ENCODE measurements at regions of chr3 and their contacts with region 1.

Region 1: DNA sequence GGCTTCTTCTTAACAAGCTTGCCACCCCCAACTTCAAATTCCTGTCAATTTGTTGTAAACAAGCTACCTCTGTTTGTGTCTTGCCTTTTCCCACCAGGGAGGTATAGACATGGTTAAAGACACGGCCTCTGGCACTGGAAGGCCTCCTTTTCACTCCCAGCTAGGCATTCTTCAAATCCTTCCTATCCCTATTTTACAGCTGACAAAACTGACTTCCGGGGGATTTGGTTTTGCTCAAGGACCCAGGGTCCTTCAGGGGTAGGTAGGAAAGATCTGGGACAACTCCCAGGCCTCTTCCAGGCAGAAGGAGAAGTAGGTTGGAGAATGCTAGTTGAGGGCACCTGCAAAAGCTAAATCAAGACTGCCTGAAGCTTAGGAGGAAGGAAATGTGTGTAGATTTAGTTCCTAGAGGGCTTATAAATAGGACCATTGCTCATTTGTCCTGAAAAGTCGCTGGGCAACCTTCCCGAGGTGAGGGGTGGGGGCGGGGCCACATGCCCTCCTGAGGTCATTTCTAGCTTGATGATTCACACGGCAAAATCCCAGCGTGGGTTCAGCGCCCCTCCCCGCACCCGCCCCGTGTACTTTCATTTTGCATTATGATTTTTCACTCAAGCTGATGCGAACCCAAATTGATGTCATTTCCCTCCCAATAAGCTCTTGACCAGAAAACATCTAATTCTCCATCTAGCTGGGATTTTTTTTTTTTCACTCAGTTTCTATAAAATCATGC is 365.5 kb downstream of the SHQ1 start:
- DNase-seq: peak; percentile 95
- H3K4me3 Mint-ChIP-seq: peak overlapping the region; percentile 42
- H3K27ac Mint-ChIP-seq: peak overlapping the region; percentile 91
- H3K4me1 Mint-ChIP-seq: peaks cover 79% of the 10 kb centered on the region
- H3K27me3 Mint-ChIP-seq: no peaks in the 10 kb centered on the region

Region 2: DNA sequence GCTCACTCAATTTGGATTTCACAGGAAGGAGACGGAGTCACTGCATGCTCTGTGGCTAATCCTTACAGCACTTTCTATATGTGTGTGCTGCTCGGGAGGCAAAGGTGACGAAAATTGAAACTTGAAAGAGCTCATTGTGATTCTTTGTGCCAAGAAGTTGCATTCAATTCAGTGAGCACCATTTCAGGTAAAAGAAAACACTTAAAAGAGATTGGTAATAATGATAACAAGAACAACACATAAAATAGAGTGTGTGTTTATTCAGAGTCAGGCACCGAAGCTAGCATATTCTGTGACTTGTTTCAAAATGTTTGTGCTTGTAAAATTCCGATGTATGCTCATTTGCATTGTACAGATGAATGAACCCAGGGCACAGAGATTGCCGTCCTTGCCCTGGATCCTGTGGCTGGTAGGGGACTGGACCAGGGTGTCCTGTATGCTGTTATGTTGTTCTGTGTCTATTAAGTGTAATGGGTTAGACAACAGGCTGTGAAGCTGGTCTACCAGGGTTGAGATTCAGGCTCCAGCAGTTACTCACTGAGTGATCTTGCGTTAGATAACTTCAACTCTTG is 504.5 kb before region 1 on chr3:
- CTCF ChIA-PET with region 1: no interaction called
- POLR2A ChIA-PET with region 1: no interaction called
- intact Hi-C with region 1: loop called (anchors 5 kb)
- DNase-seq: peak; percentile 67
- H3K4me3 Mint-ChIP-seq: peak overlapping the region; percentile 38
- H3K27ac Mint-ChIP-seq: peak overlapping the region; percentile 88
- H3K4me1 Mint-ChIP-seq: peaks cover 44% of the 10 kb centered on the region
- H3K27me3 Mint-ChIP-seq: peaks cover 19% of the 10 kb centered on the region

Region 3: DNA sequence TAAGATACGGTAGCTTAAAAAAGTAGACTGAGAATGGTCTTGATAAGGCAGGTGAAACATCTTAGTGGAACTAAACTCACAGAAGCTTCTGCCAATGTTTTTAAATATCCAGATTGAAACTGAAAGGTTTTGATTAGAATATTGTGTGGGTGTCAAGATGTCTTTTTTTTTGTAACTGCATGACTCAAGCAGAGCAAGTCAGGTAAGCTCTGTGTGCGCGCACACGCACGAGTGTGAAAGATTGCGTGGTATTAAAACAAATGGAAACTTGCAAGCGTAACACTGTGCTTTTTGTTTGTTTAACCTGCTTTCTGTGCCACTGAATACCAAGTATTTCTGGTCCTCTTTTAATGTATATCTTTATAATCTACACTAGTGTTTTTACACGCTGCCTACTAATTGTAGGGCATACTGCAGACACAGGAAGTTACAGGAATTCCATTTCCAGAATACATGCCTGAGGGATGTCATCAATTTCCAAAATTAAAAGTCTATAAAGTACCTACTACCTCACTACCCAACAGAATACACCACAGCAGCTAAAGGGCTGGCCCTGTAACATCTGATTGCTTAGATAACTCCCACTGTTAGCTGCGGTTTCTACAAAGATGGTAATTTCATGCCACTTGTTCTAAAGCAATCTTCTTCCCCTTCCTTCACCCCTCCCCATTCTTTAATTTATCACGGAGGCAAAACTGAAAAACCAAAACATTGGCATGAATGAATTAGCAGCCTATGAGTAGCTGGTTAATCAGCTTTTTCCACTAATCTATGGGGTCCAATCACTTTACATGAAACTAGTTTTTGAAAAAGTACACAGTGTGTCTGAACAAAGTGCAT is 107.3 kb before region 1 on chr3:
- CTCF ChIA-PET with region 1: no interaction called
- POLR2A ChIA-PET with region 1: no interaction called
- intact Hi-C with region 1: loop called (anchors 5 kb)
- DNase-seq: peak; percentile 70
- H3K4me3 Mint-ChIP-seq: peak overlapping the region; percentile 6
- H3K27ac Mint-ChIP-seq: peak overlapping the region; percentile 86
- H3K4me1 Mint-ChIP-seq: peaks cover 65% of the 10 kb centered on the region
- H3K27me3 Mint-ChIP-seq: no peaks in the 10 kb centered on the region

Region 4: GRCh38 chr3:72426618-72427397 is 55.9 kb before region 1 on chr3:
- CTCF ChIA-PET with region 1: no interaction called
- POLR2A ChIA-PET with region 1: interaction called, 3 read pairs
- intact Hi-C with region 1: loop called (anchors 5 kb)
- DNase-seq: no peak
- H3K4me3 Mint-ChIP-seq: peak overlapping the region; percentile 23
- H3K27ac Mint-ChIP-seq: peak overlapping the region; percentile 82
- H3K4me1 Mint-ChIP-seq: peaks cover 78% of the 10 kb centered on the region
- H3K27me3 Mint-ChIP-seq: no peaks in the 10 kb centered on the region

Region 5: DNA sequence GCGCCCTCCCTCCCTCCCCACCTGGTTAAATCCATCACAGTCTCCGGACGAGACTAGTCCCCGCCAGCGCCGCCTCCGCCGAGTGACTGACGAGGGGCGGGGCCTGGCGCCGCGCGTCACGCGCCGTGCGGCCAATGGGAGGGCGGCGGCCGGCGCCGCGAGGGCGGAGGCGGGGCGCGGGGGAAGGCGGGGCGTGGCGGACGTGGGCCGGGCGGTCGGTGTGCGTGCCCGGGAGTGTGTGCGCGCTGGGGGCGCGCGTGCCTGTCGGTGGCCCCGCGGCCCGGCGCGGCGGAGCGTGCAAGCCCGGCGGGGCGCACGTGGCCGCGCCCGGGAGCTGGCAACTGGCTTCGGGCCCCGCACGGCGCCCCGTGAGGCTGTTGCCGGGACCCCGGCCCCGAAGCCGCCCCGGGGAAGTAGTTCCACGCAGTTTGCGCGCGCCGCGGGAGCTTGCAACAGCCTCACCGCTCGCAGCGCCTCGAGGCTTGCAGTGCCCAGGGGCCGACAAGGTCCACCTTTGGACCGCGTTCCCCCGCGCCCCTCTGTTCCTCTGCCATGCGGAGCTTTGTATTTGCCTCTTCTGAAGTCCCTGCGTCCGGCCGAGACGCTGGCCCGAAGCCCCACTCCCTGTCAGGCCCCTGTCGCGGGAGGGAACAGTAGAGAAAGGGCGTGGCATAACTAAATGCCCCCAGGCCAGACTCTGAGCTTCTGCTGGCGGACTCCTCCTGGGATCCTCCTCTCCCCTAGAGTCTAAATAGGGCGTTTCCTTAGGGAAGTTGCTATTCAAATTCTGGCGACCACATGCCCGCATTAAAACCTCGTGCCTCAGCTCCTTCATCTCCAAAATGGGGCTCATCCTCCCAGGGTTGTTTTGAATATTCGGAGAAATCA is 35.5 kb before region 1 on chr3:
- CTCF ChIA-PET with region 1: interaction called, 3 read pairs
- POLR2A ChIA-PET with region 1: interaction called, 6 read pairs
- intact Hi-C with region 1: loop called (anchors 1 kb)
- DNase-seq: peak; percentile 93
- H3K4me3 Mint-ChIP-seq: peak overlapping the region; percentile 61
- H3K27ac Mint-ChIP-seq: no peak overlapping the region
- H3K4me1 Mint-ChIP-seq: peaks cover 34% of the 10 kb centered on the region
- H3K27me3 Mint-ChIP-seq: peaks cover 23% of the 10 kb centered on the region

Region 6: GRCh38 chr3:72458358-72458757 is 24.4 kb before region 1 on chr3:
- CTCF ChIA-PET with region 1: no interaction called
- POLR2A ChIA-PET with region 1: no interaction called
- intact Hi-C with region 1: loop called (anchors 1 kb)
- DNase-seq: no peak
- H3K4me3 Mint-ChIP-seq: no peak overlapping the region
- H3K27ac Mint-ChIP-seq: no peak overlapping the region
- H3K4me1 Mint-ChIP-seq: peaks cover 17% of the 10 kb centered on the region
- H3K27me3 Mint-ChIP-seq: peaks cover 18% of the 10 kb centered on the region

Region 7: GRCh38 chr3:72538070-72538745 is 55.5 kb after region 1 on chr3:
- CTCF ChIA-PET with region 1: interaction called, 3 read pairs
- POLR2A ChIA-PET with region 1: no interaction called
- intact Hi-C with region 1: loop called (anchors 1 kb)
- DNase-seq: peak; percentile 40
- H3K4me3 Mint-ChIP-seq: no peak overlapping the region
- H3K27ac Mint-ChIP-seq: no peak overlapping the region
- H3K4me1 Mint-ChIP-seq: peaks cover 21% of the 10 kb centered on the region
- H3K27me3 Mint-ChIP-seq: peaks cover 7% of the 10 kb centered on the region

Region 8: DNA sequence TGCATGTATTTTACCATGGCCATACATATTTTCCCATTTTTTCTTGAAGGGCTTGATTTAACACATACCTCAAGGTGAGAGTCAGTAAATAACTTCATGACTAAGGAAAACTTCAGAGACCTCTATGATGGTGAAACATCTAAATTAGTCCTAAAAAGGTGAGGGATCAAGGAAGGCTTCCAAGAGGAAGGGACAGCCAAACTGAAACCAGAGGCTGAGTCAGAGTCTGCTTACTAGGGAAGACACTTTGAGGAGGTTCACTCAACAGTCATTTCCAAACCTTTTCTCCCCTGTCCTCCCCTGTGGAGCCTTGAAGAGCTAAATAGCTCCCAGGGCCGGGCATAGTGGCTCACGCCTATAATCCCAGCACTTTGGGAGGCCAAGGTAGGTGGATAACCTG is 158.9 kb after region 1 on chr3:
- CTCF ChIA-PET with region 1: no interaction called
- POLR2A ChIA-PET with region 1: no interaction called
- intact Hi-C with region 1: no loop called
- DNase-seq: no peak
- H3K4me3 Mint-ChIP-seq: no peak overlapping the region
- H3K27ac Mint-ChIP-seq: no peak overlapping the region
- H3K4me1 Mint-ChIP-seq: no peaks in the 10 kb centered on the region
- H3K27me3 Mint-ChIP-seq: peaks cover 6% of the 10 kb centered on the region

Measured in activated CD4-positive, alpha-beta memory T cell treated with anti-CD3 and anti-CD28 coated beads for 36 hours (primary cell).